B cell (primary cell): ENCODE measurements at regions of chr21 and their contacts with region 1.

Region 1: GRCh38 chr21:38159355-38159754 is 97.4 kb upstream of the KCNJ15 start:
- DNase-seq: peak; percentile 31
- ATAC-seq: no peak
- H3K4me3 ChIP-seq: no peak overlapping the region
- H3K4me3 Mint-ChIP-seq: no peak overlapping the region
- H3K27ac ChIP-seq: no peak overlapping the region
- H3K27ac Mint-ChIP-seq: no peak overlapping the region
- H3K4me1 ChIP-seq: no peaks in the 10 kb centered on the region
- H3K4me1 Mint-ChIP-seq: no peaks in the 10 kb centered on the region
- H3K27me3 ChIP-seq: peaks cover 0 to 3% (median 0%) of the 10 kb centered on the region in 4 experiments
- H3K27me3 Mint-ChIP-seq: peaks cover 12% of the 10 kb centered on the region
- CTCF ChIP-seq: peak; percentile 69

Region 2: DNA sequence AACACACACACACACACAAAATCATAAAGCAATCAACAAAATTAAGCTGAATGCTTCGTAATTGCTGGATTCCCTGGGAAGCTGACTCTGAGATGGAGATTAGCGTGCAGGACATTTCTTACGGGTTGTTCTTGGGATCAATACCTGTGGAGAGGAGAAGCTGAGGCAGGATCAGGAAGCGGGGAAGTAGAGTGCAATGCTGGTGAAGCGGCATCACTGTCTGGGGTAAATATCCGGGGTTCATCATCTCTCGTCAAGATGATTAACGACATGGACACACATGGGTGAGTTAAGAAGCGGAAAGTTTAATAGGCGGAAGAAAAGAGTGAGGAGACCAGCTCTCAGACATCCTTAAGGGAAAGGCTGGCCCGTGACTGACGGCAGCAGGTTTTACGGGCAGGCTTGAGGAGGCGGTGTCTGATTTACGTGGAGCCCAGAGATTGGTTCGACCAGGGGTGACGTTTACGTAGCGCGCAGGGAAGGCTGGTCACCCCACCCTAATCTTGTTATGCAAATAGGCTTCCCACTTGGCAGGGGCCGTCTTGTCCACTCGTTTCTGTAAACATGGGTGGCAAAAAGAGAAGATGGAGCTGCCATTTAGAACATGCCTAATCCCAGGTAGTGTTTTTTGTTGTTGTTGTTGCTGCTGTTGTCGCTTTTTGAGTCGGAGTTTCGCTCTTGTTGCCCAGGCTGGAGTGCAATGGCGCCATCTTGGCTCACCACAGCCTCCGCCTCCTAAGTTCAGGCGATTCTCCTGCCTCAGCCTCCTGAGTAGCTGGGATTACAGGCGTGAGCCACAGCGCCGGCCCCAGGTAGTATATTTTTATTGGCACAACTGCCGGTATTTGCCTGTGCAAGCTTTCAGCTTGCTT is 38.1 kb before region 1 on chr21:
- CTCF ChIA-PET with region 1: no interaction called
- POLR2A ChIA-PET with region 1: no interaction called
- intact Hi-C with region 1: no loop called
- DNase-seq: no peak
- ATAC-seq: no peak
- H3K4me3 ChIP-seq: no peak overlapping the region
- H3K4me3 Mint-ChIP-seq: no peak overlapping the region
- H3K27ac ChIP-seq: no peak overlapping the region
- H3K27ac Mint-ChIP-seq: no peak overlapping the region
- H3K4me1 ChIP-seq: no peaks in the 10 kb centered on the region
- H3K4me1 Mint-ChIP-seq: no peaks in the 10 kb centered on the region
- H3K27me3 ChIP-seq: no peaks in the 10 kb centered on the region
- H3K27me3 Mint-ChIP-seq: no peaks in the 10 kb centered on the region
- CTCF ChIP-seq: no peak

Region 3: GRCh38 chr21:38219049-38219628 is 59.8 kb after region 1 on chr21:
- CTCF ChIA-PET with region 1: no interaction called
- POLR2A ChIA-PET with region 1: no interaction called
- intact Hi-C with region 1: loop called (anchors 10 kb)
- DNase-seq: peak; percentile 58
- ATAC-seq: peak; percentile 41
- H3K4me3 ChIP-seq: no peak overlapping the region
- H3K4me3 Mint-ChIP-seq: no peak overlapping the region
- H3K27ac ChIP-seq: no peak overlapping the region
- H3K27ac Mint-ChIP-seq: no peak overlapping the region
- H3K4me1 ChIP-seq: no peaks in the 10 kb centered on the region
- H3K4me1 Mint-ChIP-seq: no peaks in the 10 kb centered on the region
- H3K27me3 ChIP-seq: no peaks in the 10 kb centered on the region
- H3K27me3 Mint-ChIP-seq: peaks cover 4% of the 10 kb centered on the region
- CTCF ChIP-seq: peak; percentile 89